ENCODE measurements at regions of chr15 and their contacts with region 1.

Region 1: GRCh38 chr15:78761891-78762385 is 49.3 kb downstream of the ADAMTS7 start:
- DNase-seq: no peak
- ATAC-seq: no peak
- H3K4me3 Mint-ChIP-seq: peak overlapping the region; percentile 46
- H3K27ac Mint-ChIP-seq: peak overlapping the region; percentile 77
- H3K4me1 Mint-ChIP-seq: peaks cover 62% of the 10 kb centered on the region
- H3K27me3 Mint-ChIP-seq: no peaks in the 10 kb centered on the region
- CTCF ChIP-seq: no peak

Region 2: GRCh38 chr15:78790030-78790429 is 28.1 kb after region 1 on chr15:
- CTCF ChIA-PET with region 1: no interaction called
- POLR2A ChIA-PET with region 1: interaction called, 10 read pairs
- intact Hi-C with region 1: no loop called
- DNase-seq: no peak
- ATAC-seq: no peak
- H3K4me3 Mint-ChIP-seq: no peak overlapping the region
- H3K27ac Mint-ChIP-seq: no peak overlapping the region
- H3K4me1 Mint-ChIP-seq: no peaks in the 10 kb centered on the region
- H3K27me3 Mint-ChIP-seq: no peaks in the 10 kb centered on the region
- CTCF ChIP-seq: no peak

Region 3: DNA sequence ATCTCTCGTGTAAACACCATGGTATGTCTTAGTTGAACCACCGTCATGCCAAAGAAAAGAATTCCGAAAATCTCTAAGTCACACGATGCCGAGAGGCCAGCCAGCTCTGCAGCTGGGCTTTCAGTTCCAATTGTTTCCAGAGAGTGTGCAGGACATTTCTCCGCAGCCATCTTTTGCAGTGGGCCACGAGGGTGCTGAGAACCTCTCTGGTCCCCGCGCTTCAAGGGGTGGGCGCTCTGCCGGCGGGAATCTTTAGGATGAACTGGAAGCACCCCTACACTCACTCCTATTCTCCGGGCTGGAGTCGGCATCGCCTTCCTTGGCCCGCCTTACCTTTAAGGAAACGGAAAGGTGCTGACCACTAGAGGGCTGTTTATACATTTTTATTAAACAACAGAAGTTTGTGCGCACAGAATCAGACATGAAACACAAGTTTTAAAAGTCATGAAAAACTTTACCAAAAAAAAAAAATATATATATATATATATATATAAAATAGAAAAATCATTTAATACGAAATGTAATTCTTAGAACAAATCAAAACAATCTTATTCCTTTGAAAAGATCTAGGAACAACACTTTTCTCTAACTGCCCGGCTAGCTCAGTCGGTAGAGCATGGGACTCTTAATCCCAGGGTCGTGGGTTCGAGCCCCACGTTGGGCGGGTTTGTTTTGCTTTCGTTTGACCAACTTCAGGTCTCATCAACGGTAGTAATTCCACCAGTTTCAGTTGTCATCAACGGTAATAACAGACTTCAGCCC is 98.2 kb after region 1 on chr15:
- CTCF ChIA-PET with region 1: no interaction called
- POLR2A ChIA-PET with region 1: interaction called, 6 read pairs
- intact Hi-C with region 1: loop called (anchors 1 kb)
- DNase-seq: peak; percentile 53
- ATAC-seq: peak; percentile 91
- H3K4me3 Mint-ChIP-seq: peak overlapping the region; percentile 85
- H3K27ac Mint-ChIP-seq: peak overlapping the region; percentile 84
- H3K4me1 Mint-ChIP-seq: peaks cover 9% of the 10 kb centered on the region
- H3K27me3 Mint-ChIP-seq: no peaks in the 10 kb centered on the region
- CTCF ChIP-seq: no peak

Region 4: DNA sequence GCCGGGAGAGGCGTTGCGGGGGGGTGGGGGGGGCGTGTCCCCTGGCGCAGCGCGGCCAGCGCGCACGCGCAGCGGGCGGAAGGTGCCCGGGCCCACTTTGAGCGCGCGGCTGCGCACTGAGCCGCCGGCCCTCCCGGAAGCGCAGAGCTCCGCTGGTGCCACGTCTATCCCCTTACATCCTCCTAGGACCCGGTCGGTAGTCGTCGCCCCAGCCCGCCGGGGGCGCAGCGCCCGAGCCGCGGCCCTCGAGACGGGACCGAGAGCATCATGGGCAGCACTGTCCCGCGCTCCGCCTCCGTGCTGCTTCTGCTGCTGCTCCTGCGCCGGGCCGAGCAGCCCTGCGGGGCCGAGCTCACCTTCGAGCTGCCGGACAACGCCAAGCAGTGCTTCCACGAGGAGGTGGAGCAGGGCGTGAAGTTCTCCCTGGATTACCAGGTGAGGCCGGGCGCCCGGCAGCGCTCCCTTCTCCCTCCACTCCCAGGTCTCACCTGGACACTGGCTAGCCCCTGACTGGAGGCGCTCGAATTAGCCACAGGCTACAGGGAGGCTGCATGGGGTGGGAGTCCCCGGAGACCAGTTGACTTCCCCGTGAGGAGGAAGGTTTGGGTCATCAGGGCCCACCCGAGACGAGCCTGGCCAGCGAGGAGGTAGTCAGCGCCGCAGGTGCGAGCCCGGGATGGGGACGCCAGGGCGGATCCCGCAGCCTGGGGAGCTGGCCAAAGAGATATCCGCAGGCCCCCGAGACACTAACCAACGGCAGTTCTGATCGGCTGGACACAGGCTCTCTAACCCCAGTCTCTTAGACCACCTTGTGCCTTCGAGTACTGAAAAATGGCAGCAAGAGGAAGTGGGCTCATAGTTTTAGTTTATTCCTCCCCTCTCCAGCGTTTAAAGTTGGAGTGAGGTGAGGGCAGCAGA is 549.3 kb after region 1 on chr15 and contains the start of gene TMED3:
- CTCF ChIA-PET with region 1: no interaction called
- POLR2A ChIA-PET with region 1: no interaction called
- intact Hi-C with region 1: loop called (anchors 2 kb)
- DNase-seq: peak; percentile 80
- ATAC-seq: peak; percentile 94
- H3K4me3 Mint-ChIP-seq: peak within 1 kb of the TSS; percentile 84
- H3K27ac Mint-ChIP-seq: peak within 1 kb of the TSS; percentile 68
- H3K4me1 Mint-ChIP-seq: peaks cover 29% of the 10 kb centered on the region
- H3K27me3 Mint-ChIP-seq: peaks cover 2% of the 10 kb centered on the region
- CTCF ChIP-seq: no peak
- total RNA-seq, gene TMED3: 24.7 and 25.0 TPM in 2 replicates